Activated CD4-positive, alpha-beta memory T cell treated with anti-CD3 and anti-CD28 coated beads for 36 hours (primary cell): ENCODE measurements at regions of chr11 and their contacts with region 1.

Region 1: DNA sequence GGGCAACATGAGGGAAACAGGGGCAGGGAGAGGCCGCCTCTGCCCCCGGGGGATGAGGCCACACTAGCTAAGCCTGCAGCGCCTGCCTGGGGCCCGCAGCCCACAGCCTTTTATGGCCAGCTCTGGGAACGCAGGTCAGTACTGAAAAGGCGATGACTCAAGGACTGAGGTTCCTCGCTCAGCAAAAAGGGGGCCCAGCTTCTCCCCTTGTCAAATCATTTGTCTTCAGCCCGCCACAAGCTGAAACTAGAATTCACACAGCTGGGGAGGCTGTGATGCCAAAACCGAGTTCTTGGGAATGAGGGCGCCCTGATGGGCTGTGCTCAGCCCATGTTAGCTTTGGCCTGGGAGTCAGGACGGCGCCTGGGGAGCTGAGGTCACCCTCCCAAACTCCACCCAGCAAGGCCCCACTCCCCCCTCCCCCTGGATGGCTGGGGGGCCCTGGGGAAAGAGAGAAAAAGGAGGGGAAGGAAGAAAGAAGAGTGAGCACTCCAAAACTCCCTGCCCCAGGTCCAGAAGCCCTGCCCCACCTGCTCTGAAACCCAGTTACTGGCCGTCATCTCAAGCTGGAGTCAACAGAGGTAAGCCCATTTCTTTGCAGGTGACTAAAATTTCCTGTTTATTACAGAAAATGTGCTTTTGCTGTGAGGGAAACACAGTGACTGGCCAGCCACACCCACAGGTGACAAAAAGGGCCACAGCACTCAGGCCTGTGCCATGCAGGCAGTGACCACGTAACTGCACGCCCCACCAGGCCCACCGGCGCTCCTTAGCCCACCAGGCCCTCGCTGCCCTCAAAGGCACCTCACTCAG is 13.7 kb downstream of the EHD1 start:
- DNase-seq: peak; percentile 90
- H3K4me3 Mint-ChIP-seq: peak overlapping the region; percentile 67
- H3K27ac Mint-ChIP-seq: peak overlapping the region; percentile 96
- H3K4me1 Mint-ChIP-seq: peaks cover 93% of the 10 kb centered on the region
- H3K27me3 Mint-ChIP-seq: no peaks in the 10 kb centered on the region

Region 2: DNA sequence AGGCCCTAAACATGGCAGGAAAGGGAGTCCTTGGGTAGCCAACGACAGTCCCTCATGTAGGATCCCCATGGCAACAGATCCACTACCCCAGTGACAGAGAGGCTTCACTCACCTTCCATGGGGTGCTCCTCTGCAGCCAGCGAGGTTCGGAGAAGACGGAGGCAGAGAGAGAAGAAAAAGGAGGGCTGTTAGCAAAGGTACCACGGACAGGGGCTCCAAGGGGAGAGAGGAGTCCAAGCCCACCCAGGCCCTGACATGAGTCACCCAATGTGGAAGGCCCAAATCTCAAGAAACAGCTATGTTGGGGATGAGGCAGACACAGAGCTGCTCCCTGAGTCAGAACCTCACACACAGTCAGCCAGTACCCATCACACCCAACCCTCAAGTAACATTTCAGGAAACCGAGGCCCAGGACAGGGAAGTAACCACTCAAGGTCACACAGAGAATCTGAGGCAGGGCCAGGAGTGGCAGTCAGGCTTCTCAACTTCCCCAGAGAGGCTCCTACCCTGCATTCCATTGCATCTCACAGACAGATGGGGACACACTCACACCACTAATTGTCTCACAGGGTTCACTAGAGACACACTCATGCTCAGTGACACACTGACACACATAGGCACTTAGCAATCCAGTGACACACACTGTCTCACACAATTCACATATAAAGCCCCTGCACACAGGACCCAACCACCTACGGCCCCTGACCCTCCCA is 166.9 kb before region 1 on chr11:
- CTCF ChIA-PET with region 1: no interaction called
- POLR2A ChIA-PET with region 1: no interaction called
- intact Hi-C with region 1: no loop called
- DNase-seq: no peak
- H3K4me3 Mint-ChIP-seq: no peak overlapping the region
- H3K27ac Mint-ChIP-seq: no peak overlapping the region
- H3K4me1 Mint-ChIP-seq: peaks cover 1% of the 10 kb centered on the region
- H3K27me3 Mint-ChIP-seq: peaks cover 16% of the 10 kb centered on the region

Region 3: GRCh38 chr11:64750361-64751054 is 114.2 kb before region 1 on chr11:
- CTCF ChIA-PET with region 1: no interaction called
- POLR2A ChIA-PET with region 1: no interaction called
- intact Hi-C with region 1: no loop called
- DNase-seq: no peak
- H3K4me3 Mint-ChIP-seq: no peak overlapping the region
- H3K27ac Mint-ChIP-seq: no peak overlapping the region
- H3K4me1 Mint-ChIP-seq: peaks cover 8% of the 10 kb centered on the region
- H3K27me3 Mint-ChIP-seq: no peaks in the 10 kb centered on the region

Region 4: DNA sequence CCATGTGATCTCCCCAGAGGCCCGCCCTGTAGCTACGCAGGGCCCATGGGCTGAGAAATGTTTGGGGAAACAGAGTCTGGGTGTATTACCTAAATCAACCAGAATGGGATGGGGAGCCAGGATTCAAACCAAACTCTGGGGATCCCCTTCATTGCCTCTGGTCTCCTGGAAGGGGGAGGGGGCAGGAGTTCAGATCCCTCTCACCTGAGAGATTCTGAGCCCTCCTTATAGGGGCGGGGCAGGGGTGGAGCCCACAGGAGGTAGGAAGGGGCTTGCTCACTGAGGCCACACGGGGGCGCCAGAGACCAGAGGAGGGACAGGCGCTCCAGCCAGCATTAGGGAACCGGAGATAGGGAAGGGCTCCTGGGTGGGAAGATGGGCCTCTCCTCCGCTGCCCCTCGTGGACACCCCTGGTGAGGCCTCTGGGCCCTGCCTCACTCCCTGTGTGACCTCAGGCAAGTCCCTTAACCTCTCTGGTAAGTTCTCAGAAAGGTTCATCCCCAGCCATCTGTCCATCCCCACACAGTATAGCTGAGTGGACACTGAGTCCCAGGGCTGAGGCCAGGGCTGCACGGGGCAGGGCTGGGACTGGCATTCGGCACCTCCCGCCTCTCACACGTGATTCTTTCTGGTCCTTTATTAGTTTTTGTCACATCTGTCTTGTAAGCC is 17.5 kb before region 1 on chr11:
- CTCF ChIA-PET with region 1: interaction called, 328 read pairs
- POLR2A ChIA-PET with region 1: interaction called, 67 read pairs
- intact Hi-C with region 1: loop called (anchors 2 kb)
- DNase-seq: peak; percentile 94
- H3K4me3 Mint-ChIP-seq: no peak overlapping the region
- H3K27ac Mint-ChIP-seq: peak overlapping the region; percentile 18
- H3K4me1 Mint-ChIP-seq: peaks cover 48% of the 10 kb centered on the region
- H3K27me3 Mint-ChIP-seq: no peaks in the 10 kb centered on the region

Region 5: DNA sequence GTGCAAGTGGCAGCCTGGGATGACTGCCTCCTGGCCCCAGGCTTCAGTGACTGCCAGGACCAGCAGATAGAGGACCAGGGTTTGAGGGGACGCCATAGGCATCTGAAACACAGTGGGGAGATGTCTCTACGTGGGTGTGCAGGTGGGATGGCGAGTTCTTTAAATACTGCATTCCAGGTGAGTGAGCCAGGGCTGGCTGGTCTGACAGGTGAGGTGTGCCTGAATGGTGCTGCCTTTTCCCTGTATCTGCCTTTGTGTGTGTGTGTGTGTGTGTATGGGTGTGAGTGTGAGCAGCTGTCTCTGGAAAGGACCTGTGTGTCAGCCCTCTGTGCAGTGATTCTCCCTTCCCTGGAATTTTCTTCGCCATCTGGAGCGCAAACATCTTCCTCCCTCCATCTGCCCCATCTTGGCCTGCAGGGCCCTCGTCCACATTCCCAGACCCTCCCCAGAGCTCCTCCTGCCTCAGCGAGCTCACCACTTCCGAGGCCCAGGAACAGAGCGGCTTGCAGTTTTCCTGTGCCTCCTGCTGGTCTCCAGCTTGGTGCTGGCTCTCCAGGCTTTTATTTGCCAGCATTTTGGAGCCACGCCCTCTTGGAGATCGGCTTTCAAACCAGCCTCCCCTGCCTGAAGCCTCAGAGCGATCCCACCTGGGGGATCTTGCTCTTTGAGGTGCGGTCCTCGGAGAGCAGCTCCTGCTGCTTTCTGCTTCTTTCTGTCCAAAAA is 70.8 kb after region 1 on chr11 and contains the start of gene GPHA2:
- CTCF ChIA-PET with region 1: no interaction called
- POLR2A ChIA-PET with region 1: no interaction called
- intact Hi-C with region 1: no loop called
- DNase-seq: no peak
- H3K4me3 Mint-ChIP-seq: no peak within 1 kb of the TSS
- H3K27ac Mint-ChIP-seq: no peak within 1 kb of the TSS
- H3K4me1 Mint-ChIP-seq: peaks cover 3% of the 10 kb centered on the region
- H3K27me3 Mint-ChIP-seq: no peaks in the 10 kb centered on the region
- total RNA-seq, gene GPHA2: 0.46 TPM in 1 of 2 experiments, not detected in the other

Region 6: DNA sequence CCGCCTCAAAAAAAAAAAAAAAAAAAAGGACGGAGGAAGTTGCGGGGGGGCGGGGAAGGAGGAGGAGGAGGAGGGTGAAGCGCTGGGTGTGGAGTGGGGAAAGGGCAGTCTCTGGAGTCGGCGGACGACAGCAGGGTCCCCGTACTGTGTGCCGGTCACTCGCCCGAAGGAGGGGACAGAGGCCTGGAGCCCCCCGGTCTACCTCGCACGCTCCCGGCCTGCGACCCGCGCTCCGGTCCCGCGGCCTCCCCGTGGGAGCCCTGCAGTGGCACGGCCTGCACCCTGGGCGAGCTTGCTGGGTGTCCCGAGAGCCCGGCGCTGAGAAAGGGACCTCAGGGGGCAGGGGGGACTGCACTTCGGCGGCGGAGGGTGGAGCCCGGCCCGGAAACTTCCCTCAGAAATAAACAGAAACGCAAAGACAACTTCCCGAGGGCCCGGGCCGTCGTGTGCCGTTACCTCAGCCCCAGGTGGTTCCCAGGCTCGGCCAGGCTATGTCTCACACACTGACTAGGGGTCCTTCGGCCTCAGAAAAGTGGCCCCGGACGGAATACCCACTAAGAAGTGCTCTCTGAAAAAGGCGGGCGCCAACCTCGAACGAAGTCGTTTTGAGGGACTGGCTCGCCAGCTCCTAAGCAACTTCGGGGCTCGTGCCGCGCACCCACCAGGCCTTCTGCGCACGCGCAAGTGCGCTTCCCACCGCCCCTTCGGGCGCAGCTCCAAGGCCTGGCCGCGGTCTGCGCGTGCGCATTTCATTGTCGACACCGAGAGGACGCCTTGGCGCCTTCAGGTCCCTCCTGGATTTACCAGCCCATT is 106.9 kb after region 1 on chr11 and contains the start of gene MAJIN:
- CTCF ChIA-PET with region 1: interaction called, 3 read pairs
- POLR2A ChIA-PET with region 1: interaction called, 3 read pairs
- intact Hi-C with region 1: loop called (anchors 5 kb)
- DNase-seq: peak; percentile 91
- H3K4me3 Mint-ChIP-seq: peak within 1 kb of the TSS; percentile 66
- H3K27ac Mint-ChIP-seq: peak within 1 kb of the TSS; percentile 90
- H3K4me1 Mint-ChIP-seq: peaks cover 38% of the 10 kb centered on the region
- H3K27me3 Mint-ChIP-seq: no peaks in the 10 kb centered on the region
- total RNA-seq, gene MAJIN: 0.21 to 0.82 TPM